CD4-positive, alpha-beta memory T cell (primary cell): ENCODE measurements at regions of chr15 and their contacts with region 1.

Region 1: GRCh38 chr15:74873036-74873755 is at the start of gene SCAMP2:
- DNase-seq: peak; percentile 92 to 95 (median 94)
- H3K4me3 ChIP-seq: peak within 1 kb of the TSS; percentile 52 to 99
- H3K4me3 Mint-ChIP-seq: peak within 1 kb of the TSS; percentile 94 to 100 (median 99)
- H3K27ac ChIP-seq: peak within 1 kb of the TSS; percentile 93
- H3K27ac Mint-ChIP-seq: peak within 1 kb of the TSS; percentile 96 to 99 (median 98)
- H3K4me1 ChIP-seq: peaks cover 53% of the 10 kb centered on the region
- H3K4me1 Mint-ChIP-seq: peaks cover 33 to 57% (median 44%) of the 10 kb centered on the region in 4 donors
- H3K27me3 ChIP-seq: no peaks in the 10 kb centered on the region
- H3K27me3 Mint-ChIP-seq: no peaks in the 10 kb centered on the region
- total RNA-seq, gene SCAMP2: 132 to 138 TPM

Region 2: GRCh38 chr15:74787251-74788041 is 85.8 kb before region 1 on chr15:
- CTCF ChIA-PET with region 1: interaction called, 6 read pairs
- POLR2A ChIA-PET with region 1: interaction called, 11 read pairs
- intact Hi-C with region 1: no loop called
- DNase-seq: peak; percentile 94 to 99 (median 96)
- H3K4me3 ChIP-seq: peak overlapping the region; percentile 55 to 69
- H3K4me3 Mint-ChIP-seq: peak overlapping the region; percentile 85 to 96 (median 92)
- H3K27ac ChIP-seq: peak overlapping the region; percentile 86
- H3K27ac Mint-ChIP-seq: peak overlapping the region; percentile 95 to 99 (median 98)
- H3K4me1 ChIP-seq: peaks cover 89% of the 10 kb centered on the region
- H3K4me1 Mint-ChIP-seq: peaks cover 39 to 97% (median 66%) of the 10 kb centered on the region in 4 donors
- H3K27me3 ChIP-seq: no peaks in the 10 kb centered on the region
- H3K27me3 Mint-ChIP-seq: no peaks in the 10 kb centered on the region

Region 3: GRCh38 chr15:74842581-74843444 is 30.4 kb before region 1 on chr15 and contains the start of gene ULK3:
- CTCF ChIA-PET with region 1: interaction called, 15 read pairs
- POLR2A ChIA-PET with region 1: interaction called, 35 read pairs
- intact Hi-C with region 1: loop called (anchors 1 kb)
- DNase-seq: peak; percentile 92 to 94 (median 93)
- H3K4me3 ChIP-seq: peak within 1 kb of the TSS; percentile 81 to 83
- H3K4me3 Mint-ChIP-seq: peak within 1 kb of the TSS; percentile 87 to 92 (median 91)
- H3K27ac ChIP-seq: peak within 1 kb of the TSS; percentile 77
- H3K27ac Mint-ChIP-seq: peak within 1 kb of the TSS; percentile 91 to 97 (median 93)
- H3K4me1 ChIP-seq: peaks cover 52% of the 10 kb centered on the region
- H3K4me1 Mint-ChIP-seq: peaks cover 37 to 57% (median 46%) of the 10 kb centered on the region in 4 donors
- H3K27me3 ChIP-seq: no peaks in the 10 kb centered on the region
- H3K27me3 Mint-ChIP-seq: no peaks in the 10 kb centered on the region
- total RNA-seq, gene ULK3: 84.9 to 88.3 TPM

Region 4: GRCh38 chr15:74857082-74857655 is 16.0 kb before region 1 on chr15:
- CTCF ChIA-PET with region 1: interaction called, 8 read pairs
- POLR2A ChIA-PET with region 1: interaction called, 20 read pairs
- intact Hi-C with region 1: loop called (anchors 2 kb)
- DNase-seq: no peak
- H3K4me3 ChIP-seq: no peak overlapping the region
- H3K4me3 Mint-ChIP-seq: peak overlapping the region in 1 of 8 donors; percentile 17
- H3K27ac ChIP-seq: peak overlapping the region; percentile 11
- H3K27ac Mint-ChIP-seq: peak overlapping the region; percentile 74 to 94 (median 80)
- H3K4me1 ChIP-seq: peaks cover 32% of the 10 kb centered on the region
- H3K4me1 Mint-ChIP-seq: peaks cover 18 to 47% (median 30%) of the 10 kb centered on the region in 4 donors
- H3K27me3 ChIP-seq: no peaks in the 10 kb centered on the region
- H3K27me3 Mint-ChIP-seq: no peaks in the 10 kb centered on the region

Region 5: GRCh38 chr15:74884428-74885223 is 11.4 kb after region 1 on chr15:
- CTCF ChIA-PET with region 1: interaction called, 10 read pairs
- POLR2A ChIA-PET with region 1: interaction called, 15 read pairs
- intact Hi-C with region 1: loop called (anchors 1 kb)
- DNase-seq: no peak
- H3K4me3 ChIP-seq: no peak overlapping the region
- H3K4me3 Mint-ChIP-seq: peak overlapping the region in 2 of 8 donors; percentile 17 to 39
- H3K27ac ChIP-seq: no peak overlapping the region
- H3K27ac Mint-ChIP-seq: peak overlapping the region in 1 of 7 donors; percentile 72
- H3K4me1 ChIP-seq: peaks cover 27% of the 10 kb centered on the region
- H3K4me1 Mint-ChIP-seq: peaks cover 12 to 36% (median 20%) of the 10 kb centered on the region in 4 donors
- H3K27me3 ChIP-seq: no peaks in the 10 kb centered on the region
- H3K27me3 Mint-ChIP-seq: no peaks in the 10 kb centered on the region

Region 6: GRCh38 chr15:74889883-74890664 is 16.9 kb after region 1 on chr15 and contains the start of gene MPI:
- CTCF ChIA-PET with region 1: interaction called, 10 read pairs
- POLR2A ChIA-PET with region 1: interaction called, 50 read pairs
- intact Hi-C with region 1: loop called (anchors 1 kb)
- DNase-seq: peak; percentile 78 to 86 (median 79)
- H3K4me3 ChIP-seq: peak within 1 kb of the TSS; percentile 94 to 99
- H3K4me3 Mint-ChIP-seq: peak within 1 kb of the TSS; percentile 87 to 97 (median 94)
- H3K27ac ChIP-seq: peak within 1 kb of the TSS; percentile 78
- H3K27ac Mint-ChIP-seq: peak within 1 kb of the TSS; percentile 80 to 97 (median 94)
- H3K4me1 ChIP-seq: peaks cover 58% of the 10 kb centered on the region
- H3K4me1 Mint-ChIP-seq: peaks cover 30 to 54% (median 42%) of the 10 kb centered on the region in 4 donors
- H3K27me3 ChIP-seq: no peaks in the 10 kb centered on the region
- H3K27me3 Mint-ChIP-seq: no peaks in the 10 kb centered on the region
- total RNA-seq, gene MPI: 70.4 to 73.1 TPM

Region 7: DNA sequence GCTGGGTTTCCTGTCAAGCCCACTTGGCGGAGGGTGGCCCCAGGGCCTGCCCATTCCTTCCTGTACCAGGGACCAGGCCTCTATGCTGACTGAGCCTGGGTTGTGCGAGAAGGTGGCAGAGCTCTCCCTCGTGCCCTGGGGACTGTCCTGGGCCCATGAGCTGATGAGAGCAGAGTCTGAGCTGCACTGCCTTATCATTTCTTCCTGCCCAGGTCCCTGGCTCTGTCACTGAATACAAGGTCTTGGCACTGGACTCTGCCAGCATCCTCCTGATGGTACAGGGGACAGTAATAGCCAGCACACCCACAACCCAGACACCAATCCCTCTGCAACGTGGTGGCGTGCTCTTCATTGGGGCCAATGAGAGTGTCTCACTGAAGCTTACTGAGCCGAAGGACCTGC is 24.1 kb after region 1 on chr15:
- CTCF ChIA-PET with region 1: interaction called, 79 read pairs
- POLR2A ChIA-PET with region 1: interaction called, 50 read pairs
- intact Hi-C with region 1: loop called (anchors 1 kb)
- DNase-seq: no peak
- H3K4me3 ChIP-seq: no peak overlapping the region
- H3K4me3 Mint-ChIP-seq: no peak overlapping the region
- H3K27ac ChIP-seq: peak overlapping the region; percentile 8
- H3K27ac Mint-ChIP-seq: peak overlapping the region in 3 of 7 donors; percentile 60 to 79 (median 65)
- H3K4me1 ChIP-seq: peaks cover 49% of the 10 kb centered on the region
- H3K4me1 Mint-ChIP-seq: peaks cover 22 to 38% (median 33%) of the 10 kb centered on the region in 4 donors
- H3K27me3 ChIP-seq: no peaks in the 10 kb centered on the region
- H3K27me3 Mint-ChIP-seq: no peaks in the 10 kb centered on the region